CD8-positive, alpha-beta T cell (primary cell): ENCODE measurements at regions of chr10 and their contacts with region 1.

Region 1: DNA sequence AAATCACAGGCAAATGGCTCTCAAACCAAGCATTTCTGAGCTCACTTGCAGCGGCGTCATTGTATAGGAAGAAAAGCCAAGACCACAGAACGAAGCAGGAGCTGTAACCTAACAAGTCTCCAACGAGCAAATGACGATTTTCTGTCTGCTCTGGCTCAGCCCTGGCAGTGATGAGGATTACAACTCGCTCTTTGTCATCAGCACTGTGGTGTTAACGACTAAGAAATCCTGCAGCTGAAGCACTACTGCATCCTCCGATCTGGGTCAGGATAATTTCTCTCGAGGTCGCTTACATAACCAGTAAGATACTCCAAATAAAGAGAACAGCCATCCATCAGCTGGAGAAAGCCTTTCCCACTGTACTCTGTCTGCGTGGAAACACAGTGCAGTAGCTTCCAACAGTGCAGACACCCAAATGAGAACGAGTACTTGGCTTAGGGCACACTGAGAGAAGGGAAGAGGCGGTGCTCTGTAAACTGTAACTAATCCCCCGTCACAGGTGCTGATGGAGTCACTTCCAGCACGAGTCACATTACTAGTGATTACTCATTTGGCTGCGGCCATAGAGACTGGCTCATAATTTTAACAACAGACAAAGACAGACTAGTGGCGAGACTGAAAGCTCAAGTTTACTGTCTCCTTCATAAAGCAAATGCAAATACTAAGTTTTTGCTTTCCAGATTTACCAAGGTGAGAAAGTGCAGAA is 135.8 kb downstream of the NRBF2 start:
- DNase-seq: peak; percentile 55 to 95 (median 77)
- ATAC-seq: peak; percentile 90
- H3K4me3 ChIP-seq: peak overlapping the region; percentile 51 to 89
- H3K4me3 Mint-ChIP-seq: peak overlapping the region; percentile 97
- H3K27ac ChIP-seq: peak overlapping the region; percentile 81 to 97
- H3K27ac Mint-ChIP-seq: peak overlapping the region; percentile 99
- H3K4me1 ChIP-seq: peaks cover 20% of the 10 kb centered on the region
- H3K4me1 Mint-ChIP-seq: peaks cover 22% of the 10 kb centered on the region
- H3K27me3 ChIP-seq: no peaks in the 10 kb centered on the region
- H3K27me3 Mint-ChIP-seq: no peaks in the 10 kb centered on the region
- CTCF ChIP-seq: peak; percentile 23

Region 2: GRCh38 chr10:63217120-63217605 is 51.8 kb before region 1 on chr10:
- CTCF ChIA-PET with region 1: interaction called, 6 read pairs
- POLR2A ChIA-PET with region 1: no interaction called
- intact Hi-C with region 1: loop called in 1 of 2 experiments (anchors 1 kb)
- DNase-seq: peak in 3 of 9 experiments; percentile 20 to 77 (median 62)
- ATAC-seq: peak; percentile 86
- H3K4me3 ChIP-seq: no peak overlapping the region
- H3K4me3 Mint-ChIP-seq: no peak overlapping the region
- H3K27ac ChIP-seq: no peak overlapping the region
- H3K27ac Mint-ChIP-seq: no peak overlapping the region
- H3K4me1 ChIP-seq: peaks cover 9% of the 10 kb centered on the region
- H3K4me1 Mint-ChIP-seq: peaks cover 52% of the 10 kb centered on the region
- H3K27me3 ChIP-seq: no peaks in the 10 kb centered on the region
- H3K27me3 Mint-ChIP-seq: no peaks in the 10 kb centered on the region
- CTCF ChIP-seq: peak; percentile 93

Region 3: GRCh38 chr10:63241841-63242281 is 27.1 kb before region 1 on chr10:
- CTCF ChIA-PET with region 1: no interaction called
- POLR2A ChIA-PET with region 1: interaction called, 6 read pairs
- intact Hi-C with region 1: loop called in 1 of 2 experiments (anchors 2 kb)
- DNase-seq: peak in 1 of 9 experiments; percentile 40
- ATAC-seq: peak; percentile 44
- H3K4me3 ChIP-seq: no peak overlapping the region
- H3K4me3 Mint-ChIP-seq: peak overlapping the region; percentile 61
- H3K27ac ChIP-seq: peak overlapping the region in 1 of 2 experiments; percentile 46
- H3K27ac Mint-ChIP-seq: peak overlapping the region; percentile 75
- H3K4me1 ChIP-seq: peaks cover 60% of the 10 kb centered on the region
- H3K4me1 Mint-ChIP-seq: peaks cover 74% of the 10 kb centered on the region
- H3K27me3 ChIP-seq: no peaks in the 10 kb centered on the region
- H3K27me3 Mint-ChIP-seq: no peaks in the 10 kb centered on the region
- CTCF ChIP-seq: no peak

Region 4: GRCh38 chr10:63257778-63258177 is 11.2 kb before region 1 on chr10:
- CTCF ChIA-PET with region 1: interaction called, 5 read pairs
- POLR2A ChIA-PET with region 1: interaction called, 7 read pairs
- intact Hi-C with region 1: loop called in 1 of 2 experiments (anchors 1 kb)
- DNase-seq: no peak
- ATAC-seq: no peak
- H3K4me3 ChIP-seq: no peak overlapping the region
- H3K4me3 Mint-ChIP-seq: peak overlapping the region; percentile 13
- H3K27ac ChIP-seq: no peak overlapping the region
- H3K27ac Mint-ChIP-seq: no peak overlapping the region
- H3K4me1 ChIP-seq: peaks cover 60% of the 10 kb centered on the region
- H3K4me1 Mint-ChIP-seq: peaks cover 86% of the 10 kb centered on the region
- H3K27me3 ChIP-seq: no peaks in the 10 kb centered on the region
- H3K27me3 Mint-ChIP-seq: no peaks in the 10 kb centered on the region
- CTCF ChIP-seq: no peak

Region 5: GRCh38 chr10:63465293-63466143 is 196.6 kb after region 1 on chr10 and contains the start of gene JMJD1C:
- CTCF ChIA-PET with region 1: interaction called, 4 read pairs
- POLR2A ChIA-PET with region 1: interaction called, 3 read pairs
- intact Hi-C with region 1: loop called (anchors 2 to 5 kb)
- DNase-seq: peak; percentile 24 to 80 (median 59)
- ATAC-seq: peak; percentile 69
- H3K4me3 ChIP-seq: peak within 1 kb of the TSS; percentile 89 to 92
- H3K4me3 Mint-ChIP-seq: peak within 1 kb of the TSS; percentile 89
- H3K27ac ChIP-seq: peak within 1 kb of the TSS; percentile 65 to 79
- H3K27ac Mint-ChIP-seq: peak within 1 kb of the TSS; percentile 91
- H3K4me1 ChIP-seq: peaks cover 8% of the 10 kb centered on the region
- H3K4me1 Mint-ChIP-seq: peaks cover 33% of the 10 kb centered on the region
- H3K27me3 ChIP-seq: no peaks in the 10 kb centered on the region
- H3K27me3 Mint-ChIP-seq: no peaks in the 10 kb centered on the region
- CTCF ChIP-seq: no peak
- total RNA-seq, gene JMJD1C: 377 to 392 TPM

Region 6: DNA sequence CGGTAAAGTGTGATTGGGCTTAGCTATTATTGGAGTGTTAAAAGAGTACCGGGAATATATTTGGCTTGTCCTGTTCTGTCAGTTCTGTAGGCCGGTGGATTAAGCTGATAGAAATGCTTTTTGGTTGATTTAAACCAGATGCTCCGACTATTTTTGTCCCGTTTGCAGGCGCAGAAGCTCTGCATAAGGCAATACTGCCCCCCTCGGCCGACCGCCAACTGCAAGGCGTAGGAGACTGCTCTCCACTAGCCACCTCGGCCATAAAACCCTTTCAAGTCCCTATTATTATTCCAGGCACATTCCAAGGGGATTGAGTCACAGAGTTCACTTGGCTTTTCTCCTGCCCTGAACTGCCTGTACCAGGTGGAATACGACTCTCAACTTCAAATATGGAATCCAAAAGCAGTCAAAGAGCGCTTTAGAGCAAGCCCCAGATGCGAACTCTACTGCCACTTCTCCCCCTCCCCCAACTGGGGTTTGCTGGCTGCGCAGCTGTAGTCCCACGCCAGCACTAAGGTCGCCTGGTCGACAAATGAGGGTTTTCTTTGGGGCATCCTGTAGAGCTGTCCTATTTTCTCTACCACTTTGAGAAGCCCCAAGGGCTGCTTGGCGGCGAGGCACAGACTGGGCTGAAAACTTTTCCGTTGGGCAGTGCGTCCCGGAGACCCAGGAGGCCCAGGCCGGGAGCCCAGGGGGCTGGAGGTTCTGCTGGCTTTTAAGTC is 360.6 kb after region 1 on chr10:
- CTCF ChIA-PET with region 1: interaction called, 16 read pairs
- POLR2A ChIA-PET with region 1: interaction called, 4 read pairs
- intact Hi-C with region 1: loop called (anchors 2 to 5 kb)
- DNase-seq: peak; percentile 52 to 85 (median 80)
- ATAC-seq: peak; percentile 62
- H3K4me3 ChIP-seq: peak overlapping the region; percentile 71 to 81
- H3K4me3 Mint-ChIP-seq: peak overlapping the region; percentile 97
- H3K27ac ChIP-seq: peak overlapping the region; percentile 31 to 45
- H3K27ac Mint-ChIP-seq: peak overlapping the region; percentile 91
- H3K4me1 ChIP-seq: peaks cover 20% of the 10 kb centered on the region
- H3K4me1 Mint-ChIP-seq: peaks cover 29% of the 10 kb centered on the region
- H3K27me3 ChIP-seq: no peaks in the 10 kb centered on the region
- H3K27me3 Mint-ChIP-seq: no peaks in the 10 kb centered on the region
- CTCF ChIP-seq: peak; percentile 87